Activated CD4-positive, alpha-beta T cell treated with anti-CD3 and anti-CD28 coated beads, Interleukin-2, amount 10 ng/mL, durations not matched to agents 7 days and 5 days (primary cell): ENCODE measurements at regions of chr3 and their contacts with region 1.

Region 1: DNA sequence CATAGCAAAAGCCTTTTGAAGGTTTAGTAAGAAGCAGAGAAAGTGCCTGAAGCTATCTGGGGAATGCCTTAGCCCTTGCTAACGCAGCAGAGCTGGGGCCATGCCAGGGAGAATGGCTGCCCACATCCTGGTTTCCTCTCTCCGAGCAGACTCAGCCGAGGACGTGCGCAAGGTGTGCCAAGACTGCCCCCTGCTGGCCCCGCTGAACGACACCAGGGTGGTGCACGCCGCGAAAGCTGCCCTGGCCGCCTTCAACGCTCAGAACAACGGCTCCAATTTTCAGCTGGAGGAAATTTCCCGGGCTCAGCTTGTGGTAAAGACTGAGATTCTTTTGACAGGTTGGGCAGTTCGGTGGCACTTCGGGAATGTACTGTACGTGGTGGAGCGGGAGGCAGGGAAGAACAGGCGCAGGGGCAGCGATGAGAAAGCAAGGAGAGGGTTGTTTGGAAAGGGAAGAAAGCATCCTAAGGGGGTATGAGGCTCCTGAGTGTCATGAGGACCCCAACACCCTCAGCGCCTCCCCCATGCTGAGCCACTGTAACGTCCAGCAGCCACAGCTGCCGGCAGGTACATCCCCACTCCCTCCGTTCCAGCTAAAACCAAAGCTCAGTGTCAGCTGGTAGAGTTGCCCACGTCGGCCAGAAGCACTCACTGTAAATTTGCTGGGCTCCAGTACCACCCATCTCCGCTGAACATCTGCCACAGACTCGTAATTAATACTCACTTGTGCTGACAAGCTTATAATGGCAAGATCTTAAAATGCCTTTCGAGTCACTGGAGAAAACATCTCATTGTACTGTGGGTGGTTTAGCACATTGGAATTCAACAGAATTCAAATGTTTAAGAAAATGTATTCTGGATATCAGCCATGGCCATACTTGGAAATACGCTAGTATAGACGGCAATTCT is 4.4 kb downstream of the AHSG start:
- DNase-seq: peak; percentile 85
- H3K4me3 Mint-ChIP-seq: peak overlapping the region; percentile 16
- H3K27ac Mint-ChIP-seq: peak overlapping the region; percentile 38
- H3K4me1 Mint-ChIP-seq: peaks cover 20% of the 10 kb centered on the region
- H3K27me3 Mint-ChIP-seq: peaks cover 35% of the 10 kb centered on the region

Region 2: DNA sequence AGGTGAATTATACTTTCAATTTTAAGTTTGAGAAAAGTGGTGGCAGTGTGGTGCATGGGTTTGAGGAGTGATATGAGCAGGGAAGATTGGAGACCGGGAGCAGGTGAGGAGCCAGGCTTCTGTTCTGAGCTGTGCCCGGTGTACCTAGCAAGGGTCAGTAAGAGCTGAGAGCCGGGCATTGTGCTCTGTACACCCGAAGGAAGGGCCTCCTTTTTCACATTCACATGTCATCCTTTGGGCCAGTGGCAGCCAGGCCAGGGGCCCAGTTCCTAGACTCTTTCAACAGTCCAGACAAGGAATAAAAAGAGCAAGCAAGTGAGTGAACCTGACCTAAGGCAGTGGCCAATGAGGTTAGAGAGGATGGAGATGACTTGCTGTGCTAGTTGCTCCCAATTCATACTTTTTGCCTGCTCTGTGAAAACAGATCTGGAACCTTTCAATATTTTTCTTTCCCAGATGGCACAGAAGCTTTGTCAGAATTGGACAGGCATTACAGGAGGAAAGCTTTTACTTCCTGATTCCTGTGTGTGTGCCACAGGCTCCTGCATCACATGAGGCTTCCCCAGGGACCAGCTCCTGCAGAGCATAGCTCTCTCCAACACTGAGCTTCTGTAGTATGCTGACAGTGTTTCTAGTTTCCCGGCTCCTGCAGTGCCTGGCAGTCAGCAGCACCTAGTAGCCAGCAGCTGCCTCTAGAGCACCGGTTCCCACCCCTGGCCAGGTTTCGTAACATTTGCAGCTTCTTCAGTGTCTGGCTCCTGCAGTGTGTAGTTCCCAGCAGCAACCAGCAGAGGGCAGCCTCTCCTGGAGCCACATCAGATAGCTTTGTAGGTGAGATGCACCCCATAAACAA is 674.2 kb before region 1 on chr3:
- CTCF ChIA-PET with region 1: interaction called, 10 read pairs
- POLR2A ChIA-PET with region 1: no interaction called
- DNase-seq: peak; percentile 88
- H3K4me3 Mint-ChIP-seq: peak overlapping the region; percentile 28
- H3K27ac Mint-ChIP-seq: peak overlapping the region; percentile 79
- H3K4me1 Mint-ChIP-seq: peaks cover 22% of the 10 kb centered on the region
- H3K27me3 Mint-ChIP-seq: peaks cover 13% of the 10 kb centered on the region

Region 3: GRCh38 chr3:186603159-186603558 is 14.1 kb before region 1 on chr3:
- CTCF ChIA-PET with region 1: interaction called, 17 read pairs
- POLR2A ChIA-PET with region 1: no interaction called
- DNase-seq: no peak
- H3K4me3 Mint-ChIP-seq: no peak overlapping the region
- H3K27ac Mint-ChIP-seq: no peak overlapping the region
- H3K4me1 Mint-ChIP-seq: no peaks in the 10 kb centered on the region
- H3K27me3 Mint-ChIP-seq: no peaks in the 10 kb centered on the region

Region 4: GRCh38 chr3:186630950-186631641 is 13.8 kb after region 1 on chr3:
- CTCF ChIA-PET with region 1: interaction called, 15 read pairs
- POLR2A ChIA-PET with region 1: no interaction called
- DNase-seq: no peak
- H3K4me3 Mint-ChIP-seq: no peak overlapping the region
- H3K27ac Mint-ChIP-seq: no peak overlapping the region
- H3K4me1 Mint-ChIP-seq: no peaks in the 10 kb centered on the region
- H3K27me3 Mint-ChIP-seq: peaks cover 16% of the 10 kb centered on the region

Region 5: DNA sequence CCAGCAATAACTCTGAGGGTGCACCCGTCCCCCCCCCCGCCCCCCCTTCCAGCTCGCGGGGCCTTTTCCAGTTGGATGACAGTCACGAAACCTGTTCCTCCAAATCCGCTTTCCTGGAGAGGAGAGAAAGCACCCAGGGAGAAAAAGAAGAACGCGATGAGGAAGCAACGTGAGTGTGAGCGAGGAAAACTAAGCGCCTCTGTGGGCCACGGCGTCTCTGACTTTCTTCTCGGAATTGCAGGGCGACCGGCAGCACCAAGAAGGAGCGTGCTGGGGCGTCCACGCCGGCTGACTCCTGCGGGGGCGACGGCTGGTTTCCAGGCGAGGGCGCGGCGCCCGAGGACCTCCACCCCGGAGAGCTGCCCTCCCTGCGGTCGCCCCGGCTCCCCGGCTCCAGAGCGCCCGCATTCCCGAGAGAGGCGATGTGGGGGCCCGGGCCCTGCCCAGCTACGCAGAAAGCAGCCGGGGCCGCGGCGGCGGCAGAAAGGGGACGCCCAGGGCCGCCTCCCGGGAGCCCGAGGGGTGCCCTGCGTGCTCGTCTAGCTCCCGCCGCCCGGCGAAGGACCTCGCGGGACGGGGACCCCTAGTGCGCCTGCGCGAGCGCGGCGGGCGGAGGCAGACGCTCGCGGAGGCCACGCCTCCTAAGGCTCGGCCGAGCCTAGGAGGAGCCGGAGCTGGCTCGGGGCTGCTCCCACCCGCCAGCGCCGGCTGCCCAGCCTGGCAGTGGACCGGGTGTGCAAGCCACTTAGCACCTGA is 209.9 kb after region 1 on chr3:
- CTCF ChIA-PET with region 1: interaction called, 11 read pairs
- POLR2A ChIA-PET with region 1: no interaction called
- DNase-seq: peak; percentile 82
- H3K4me3 Mint-ChIP-seq: peak overlapping the region; percentile 66
- H3K27ac Mint-ChIP-seq: no peak overlapping the region
- H3K4me1 Mint-ChIP-seq: peaks cover 26% of the 10 kb centered on the region
- H3K27me3 Mint-ChIP-seq: peaks cover 47% of the 10 kb centered on the region

Region 6: DNA sequence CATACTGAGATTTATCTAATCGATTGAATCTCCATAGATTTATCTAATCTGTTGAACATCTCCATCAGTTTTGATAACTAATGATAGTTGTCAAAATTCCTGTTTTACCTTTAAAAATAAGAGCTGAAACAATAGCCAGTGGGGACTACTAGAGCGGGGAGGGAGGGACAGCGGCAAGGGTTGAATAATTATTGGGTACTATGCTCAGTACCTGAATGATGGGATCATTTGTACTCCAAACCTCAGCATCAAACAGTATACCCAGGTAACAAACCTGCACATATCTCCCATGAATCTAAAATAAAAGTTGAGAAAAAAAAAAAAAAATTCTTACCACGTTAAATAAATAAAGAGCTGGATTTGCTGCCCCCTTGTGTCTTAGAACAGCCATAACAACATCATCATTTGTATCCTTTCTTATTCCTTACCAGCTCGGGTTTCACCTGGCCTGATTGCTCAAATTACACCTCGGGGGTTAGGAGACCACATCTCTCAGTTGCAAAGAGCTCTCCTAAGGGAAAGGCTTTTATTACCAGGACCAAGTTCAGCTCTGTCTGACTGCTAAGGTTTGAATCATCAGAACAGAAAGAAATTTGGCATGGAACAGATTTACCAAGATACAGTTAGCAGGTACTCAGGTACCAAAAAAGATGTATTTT is 547.7 kb after region 1 on chr3:
- CTCF ChIA-PET with region 1: interaction called, 11 read pairs
- POLR2A ChIA-PET with region 1: no interaction called
- DNase-seq: peak; percentile 65
- H3K4me3 Mint-ChIP-seq: no peak overlapping the region
- H3K27ac Mint-ChIP-seq: no peak overlapping the region
- H3K4me1 Mint-ChIP-seq: peaks cover 9% of the 10 kb centered on the region
- H3K27me3 Mint-ChIP-seq: peaks cover 14% of the 10 kb centered on the region